Ovary (tissue), 10 donors: ENCODE measurements at regions of chr19 and their contacts with region 1.

Region 1: GRCh38 chr19:53246498-53246897 is 8.2 kb downstream of the ZNF677 start:
- DNase-seq: no peak
- H3K4me3 ChIP-seq: no peak overlapping the region
- H3K27ac ChIP-seq: no peak overlapping the region
- H3K4me1 ChIP-seq: no peaks in the 10 kb centered on the region
- H3K27me3 ChIP-seq: no peaks in the 10 kb centered on the region
- CTCF ChIP-seq: no peak
- EP300 ChIP-seq: no peak
- POLR2A ChIP-seq: no peak

Region 2: GRCh38 chr19:53019684-53020083 is 226.8 kb before region 1 on chr19:
- intact Hi-C with region 1: no loop called
- DNase-seq: no peak
- H3K4me3 ChIP-seq: no peak overlapping the region
- H3K27ac ChIP-seq: no peak overlapping the region
- H3K4me1 ChIP-seq: no peaks in the 10 kb centered on the region
- H3K27me3 ChIP-seq: no peaks in the 10 kb centered on the region
- CTCF ChIP-seq: no peak
- EP300 ChIP-seq: no peak
- POLR2A ChIP-seq: no peak

Region 3: GRCh38 chr19:53212703-53213320 is 33.7 kb before region 1 on chr19:
- intact Hi-C with region 1: loop called in 1 of 4 experiments (anchors 5 kb)
- DNase-seq: no peak
- H3K4me3 ChIP-seq: no peak overlapping the region
- H3K27ac ChIP-seq: no peak overlapping the region
- H3K4me1 ChIP-seq: no peaks in the 10 kb centered on the region
- H3K27me3 ChIP-seq: no peaks in the 10 kb centered on the region
- CTCF ChIP-seq: no peak
- EP300 ChIP-seq: no peak
- POLR2A ChIP-seq: no peak